ENCODE measurements at regions of chrX and their contacts with region 1.

Region 1: DNA sequence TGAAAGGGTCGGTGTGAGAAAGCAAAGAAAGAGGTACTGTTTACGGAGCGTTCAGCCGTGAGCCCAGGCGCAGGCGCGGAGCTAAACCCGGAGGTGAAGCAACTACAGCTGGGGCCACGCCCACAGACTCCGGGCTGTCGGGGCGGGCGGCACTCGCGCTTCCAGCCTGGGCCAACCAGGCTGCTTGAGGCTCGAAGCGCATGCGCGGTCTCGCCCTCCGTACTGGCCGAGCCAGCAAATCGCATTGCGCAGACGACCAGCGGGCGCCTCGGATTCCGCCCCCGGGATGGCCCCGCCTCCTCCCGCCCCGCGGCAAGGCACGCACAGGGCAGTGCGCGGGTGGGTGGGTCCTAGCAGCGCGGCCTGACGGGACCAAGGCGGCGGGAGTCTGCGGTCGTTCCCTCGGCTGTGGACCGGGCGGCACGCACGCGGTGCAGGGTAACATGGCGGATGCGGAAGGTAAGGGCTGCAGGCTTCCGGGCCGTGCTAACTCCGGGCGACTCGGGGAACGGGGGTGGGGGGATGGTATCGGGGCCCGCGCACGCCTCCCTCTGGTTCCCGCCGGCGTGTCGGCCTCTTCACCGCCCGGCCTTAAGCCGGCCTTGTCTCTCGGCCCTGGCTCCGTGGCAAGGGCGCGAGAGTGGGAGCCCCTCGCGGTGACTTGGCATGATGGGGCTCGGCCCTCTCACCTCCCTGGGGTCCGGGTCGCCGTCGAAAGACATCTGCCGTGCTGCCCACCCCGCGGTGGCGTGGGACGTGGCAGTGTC is at the start of gene DKC1:
- DNase-seq: peak; percentile 98

Region 2: DNA sequence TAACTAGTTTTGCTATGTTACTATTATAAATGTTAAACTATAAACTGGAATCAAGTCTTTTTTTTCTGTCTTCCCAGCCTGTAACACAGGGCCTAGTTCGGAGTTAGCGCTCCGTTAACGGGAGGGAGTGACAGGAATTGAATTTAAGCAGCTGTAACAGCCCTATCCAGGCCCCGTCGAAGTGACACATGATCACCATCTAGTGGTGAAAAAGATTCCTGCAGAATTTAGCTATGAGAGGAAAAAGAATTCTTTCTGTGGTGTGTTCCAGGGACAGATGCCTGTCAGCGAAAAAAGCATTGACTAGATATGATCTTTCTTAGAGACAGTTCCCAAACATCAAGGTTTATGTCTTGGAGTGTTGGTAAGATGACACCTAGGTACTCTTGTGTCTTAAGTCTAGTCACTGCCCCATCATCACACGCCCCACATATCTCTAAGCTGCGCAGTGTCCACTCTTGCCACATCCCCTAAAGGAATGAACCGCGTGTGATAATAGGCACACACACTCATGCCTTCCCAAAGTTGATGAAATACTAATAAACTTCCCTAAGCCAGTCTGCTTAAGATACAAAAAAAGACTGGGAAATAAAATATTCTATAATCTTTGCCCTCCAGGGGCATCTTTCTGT is 13.9 kb before region 1 on chrX:
- CTCF ChIA-PET with region 1: interaction called, 10 read pairs
- POLR2A ChIA-PET with region 1: interaction called, 31 read pairs
- DNase-seq: peak; percentile 73

Region 3: DNA sequence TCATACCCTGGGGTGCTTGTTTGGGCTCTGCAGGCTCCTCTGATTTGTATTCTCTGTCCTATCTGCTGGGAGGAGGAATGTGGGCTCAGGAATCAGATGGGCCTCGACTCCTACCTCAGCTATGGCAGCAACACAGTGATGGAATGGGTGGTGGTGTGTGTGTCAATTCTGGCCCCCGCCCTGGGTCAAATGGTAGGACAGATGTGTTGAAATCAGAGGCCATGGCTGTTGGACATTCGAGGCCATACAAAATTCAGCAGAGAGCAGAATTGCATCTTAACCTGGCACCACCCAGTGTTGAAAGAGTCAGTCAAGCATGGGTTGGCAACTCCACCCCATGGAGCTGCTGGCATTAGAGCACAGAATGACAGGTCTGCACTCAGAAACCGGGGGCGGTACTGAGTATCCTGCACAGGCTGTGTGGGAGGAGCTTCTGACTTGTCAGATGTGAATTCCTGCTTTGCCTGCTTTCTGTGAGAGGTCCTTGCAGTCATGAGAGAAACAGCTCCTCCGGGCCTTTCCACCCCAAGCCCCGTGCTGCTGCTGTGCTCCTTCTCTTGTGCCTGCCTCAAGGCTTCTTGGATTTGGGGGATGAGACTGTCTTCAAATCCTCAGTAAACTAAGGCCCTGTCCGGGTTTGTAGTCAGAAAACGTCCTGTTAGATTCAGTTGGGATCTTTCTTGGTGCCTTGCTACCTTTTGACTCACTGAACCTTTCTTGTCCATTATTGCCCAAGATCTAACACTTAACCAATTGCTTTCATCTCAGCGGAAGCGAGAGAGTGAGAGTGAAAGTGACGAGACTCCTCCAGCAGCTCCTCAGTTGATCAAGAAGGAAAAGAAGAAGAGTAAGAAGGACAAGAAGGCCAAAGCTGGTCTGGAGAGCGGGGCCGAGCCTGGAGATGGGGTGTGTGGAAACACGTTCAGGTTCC is 13.0 kb after region 1 on chrX:
- CTCF ChIA-PET with region 1: no interaction called
- POLR2A ChIA-PET with region 1: interaction called, 10 read pairs
- DNase-seq: no peak

Region 4: DNA sequence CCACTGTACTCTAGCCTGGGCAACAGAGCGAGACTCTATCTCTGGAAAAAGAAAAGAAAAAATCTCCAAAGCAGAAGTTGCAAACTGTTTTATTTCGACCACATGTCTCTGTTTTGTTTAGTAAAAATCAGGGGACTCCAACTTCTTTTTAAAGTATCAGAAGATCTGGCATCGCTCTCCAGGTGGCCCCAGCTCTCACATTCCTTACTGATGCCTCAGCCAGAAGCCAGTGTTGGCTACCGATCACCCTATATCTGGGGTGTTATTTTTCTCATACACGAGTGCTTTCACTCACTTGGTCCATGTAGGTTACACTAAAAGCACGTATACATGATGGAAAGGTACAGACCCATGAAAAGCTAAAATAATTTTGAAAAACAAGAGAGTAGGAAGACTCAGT is 34.3 kb after region 1 on chrX:
- CTCF ChIA-PET with region 1: no interaction called
- POLR2A ChIA-PET with region 1: interaction called, 15 read pairs
- DNase-seq: no peak

Measured in HEK293T (cell line).